ENCODE measurements at regions of chr2 and their contacts with region 1.

Region 1: DNA sequence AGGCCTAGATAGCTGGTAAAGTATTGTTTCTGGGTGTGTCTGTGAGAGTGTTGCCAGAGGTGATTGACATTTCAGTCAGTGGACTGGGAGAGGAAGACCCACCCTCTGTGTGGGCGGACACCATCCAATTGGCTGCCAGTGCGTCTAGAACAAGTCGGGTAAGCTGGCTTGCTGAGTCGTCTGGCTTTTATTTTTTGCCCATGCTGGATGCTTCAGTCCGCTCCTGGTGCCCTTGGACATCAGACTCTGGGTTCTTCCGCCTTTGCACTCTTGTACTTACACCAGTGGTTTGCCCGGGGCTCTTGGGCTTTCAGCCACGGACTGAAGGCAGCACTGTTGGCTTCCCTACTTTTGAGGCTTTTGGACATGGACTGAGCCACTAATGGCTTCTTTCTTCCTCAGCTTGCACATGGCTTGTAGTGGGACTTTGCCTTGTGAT is 24.3 kb downstream of the DIS3L2 start:
- DNase-seq: peak; percentile 84
- H3K4me3 Mint-ChIP-seq: peak overlapping the region; percentile 70
- H3K27ac Mint-ChIP-seq: peak overlapping the region; percentile 46
- H3K4me1 Mint-ChIP-seq: peaks cover 15% of the 10 kb centered on the region
- H3K27me3 Mint-ChIP-seq: no peaks in the 10 kb centered on the region
- CTCF ChIP-seq: no peak

Region 2: GRCh38 chr2:231961349-231962166 is 24.3 kb before region 1 on chr2 and contains the start of gene DIS3L2:
- CTCF ChIA-PET with region 1: no interaction called
- POLR2A ChIA-PET with region 1: interaction called, 12 read pairs
- intact Hi-C with region 1: no loop called
- DNase-seq: peak; percentile 79
- H3K4me3 Mint-ChIP-seq: peak within 1 kb of the TSS; percentile 79
- H3K27ac Mint-ChIP-seq: peak within 1 kb of the TSS; percentile 57
- H3K4me1 Mint-ChIP-seq: peaks cover 23% of the 10 kb centered on the region
- H3K27me3 Mint-ChIP-seq: no peaks in the 10 kb centered on the region
- CTCF ChIP-seq: no peak
- total RNA-seq, gene DIS3L2: 32.6 and 47.4 TPM in 2 replicates

Measured in MCF 10A (cell line).